Posterior cingulate gyrus (tissue), 11 donors: ENCODE measurements at regions of chr21 and their contacts with region 1.

Region 1: GRCh38 chr21:33025489-33026442 is at the start of gene OLIG2:
- DNase-seq: peak; percentile 87 to 99 (median 95)

Region 2: GRCh38 chr21:32940079-32941014 is 85.4 kb before region 1 on chr21:
- intact Hi-C with region 1: loop called (anchors 2 kb)
- DNase-seq: peak in 3 of 10 donors; percentile 42 to 64 (median 46)

Region 3: DNA sequence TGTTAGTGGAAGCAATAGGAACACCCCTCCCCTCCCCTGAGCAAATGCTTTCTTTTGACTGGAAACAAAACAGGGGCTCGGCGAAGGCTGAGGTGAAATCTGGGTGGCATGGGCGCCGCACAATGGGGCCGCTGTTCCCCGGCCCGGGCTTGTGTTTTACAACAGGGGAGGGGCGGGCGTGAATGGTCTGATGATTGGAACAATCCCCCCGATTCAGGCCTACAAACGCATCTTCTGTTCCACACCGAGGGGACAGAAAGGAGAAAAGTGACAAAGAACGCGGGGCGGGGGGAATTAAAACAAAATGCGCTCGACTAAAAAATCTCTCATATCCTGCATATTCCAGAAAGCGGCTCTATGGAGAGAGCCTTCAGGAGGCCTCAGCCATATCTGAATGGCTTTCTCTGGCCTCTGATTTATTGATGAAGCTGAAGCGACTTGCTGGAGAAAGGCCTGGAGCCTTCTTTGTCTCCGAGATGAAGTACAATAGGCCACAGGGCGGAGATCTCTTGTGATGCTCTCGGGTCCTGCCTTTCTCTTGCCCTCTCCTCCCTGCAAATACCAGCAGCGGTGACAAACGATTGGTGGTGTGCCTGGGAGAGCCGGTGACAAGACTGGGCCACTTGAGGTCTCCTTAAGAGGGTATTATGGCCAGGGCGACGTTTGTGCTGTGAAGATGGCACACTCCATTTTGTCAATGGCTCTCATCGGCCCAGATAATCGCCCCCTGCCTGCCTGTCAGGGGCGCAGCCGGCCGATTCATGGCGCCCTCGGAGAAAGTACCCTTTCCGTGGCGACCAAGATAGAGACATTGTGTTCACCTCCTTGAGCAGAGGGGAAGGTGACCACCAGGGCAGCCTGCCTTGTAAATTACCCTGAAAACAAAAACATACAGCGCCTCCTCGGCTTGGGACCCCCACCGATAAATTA is 47.2 kb before region 1 on chr21:
- intact Hi-C with region 1: loop called (anchors 10 kb)
- DNase-seq: peak; percentile 52 to 97 (median 78)

Region 4: DNA sequence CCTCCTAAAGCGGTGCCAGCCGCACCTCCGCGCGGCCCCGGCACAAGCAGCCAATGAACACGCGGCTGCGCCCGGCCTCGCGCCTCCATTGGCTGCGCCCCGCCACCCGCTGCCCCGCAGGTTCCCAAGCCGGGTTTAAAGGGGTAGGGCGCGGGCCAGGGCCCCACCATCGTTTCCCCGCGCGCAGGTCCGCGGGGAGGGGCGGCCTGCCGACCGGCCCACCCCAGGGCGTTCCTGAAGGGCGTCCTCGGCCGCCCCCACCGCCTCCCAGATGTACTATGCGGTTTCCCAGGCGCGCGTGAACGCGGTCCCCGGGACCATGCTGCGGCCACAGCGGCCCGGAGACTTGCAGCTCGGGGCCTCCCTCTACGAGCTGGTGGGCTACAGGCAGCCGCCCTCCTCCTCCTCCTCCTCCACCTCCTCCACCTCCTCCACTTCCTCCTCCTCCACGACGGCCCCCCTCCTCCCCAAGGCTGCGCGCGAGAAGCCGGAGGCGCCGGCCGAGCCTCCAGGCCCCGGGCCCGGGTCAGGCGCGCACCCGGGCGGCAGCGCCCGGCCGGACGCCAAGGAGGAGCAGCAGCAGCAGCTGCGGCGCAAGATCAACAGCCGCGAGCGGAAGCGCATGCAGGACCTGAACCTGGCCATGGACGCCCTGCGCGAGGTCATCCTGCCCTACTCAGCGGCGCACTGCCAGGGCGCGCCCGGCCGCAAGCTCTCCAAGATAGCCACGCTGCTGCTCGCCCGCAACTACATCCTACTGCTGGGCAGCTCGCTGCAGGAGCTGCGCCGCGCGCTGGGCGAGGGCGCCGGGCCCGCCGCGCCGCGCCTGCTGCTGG is 44.4 kb after region 1 on chr21 and contains the start of gene OLIG1:
- intact Hi-C with region 1: loop called (anchors 1 kb)
- DNase-seq: peak; percentile 66 to 97 (median 76)

Region 5: GRCh38 chr21:33089398-33090119 is 63.8 kb after region 1 on chr21:
- intact Hi-C with region 1: no loop called
- DNase-seq: no peak

Region 6: GRCh38 chr21:33127154-33127893 is 101.6 kb after region 1 on chr21:
- intact Hi-C with region 1: loop called (anchors 1 kb)
- DNase-seq: peak; percentile 42 to 97 (median 84)